Activated naive CD8-positive, alpha-beta T cell treated with anti-CD3 and anti-CD28 coated beads, Interleukin-2, amount 10 ng/mL, durations not matched to agents 7 days and 5 days (primary cell): ENCODE measurements at regions of chr6 and their contacts with region 1.

Region 1: DNA sequence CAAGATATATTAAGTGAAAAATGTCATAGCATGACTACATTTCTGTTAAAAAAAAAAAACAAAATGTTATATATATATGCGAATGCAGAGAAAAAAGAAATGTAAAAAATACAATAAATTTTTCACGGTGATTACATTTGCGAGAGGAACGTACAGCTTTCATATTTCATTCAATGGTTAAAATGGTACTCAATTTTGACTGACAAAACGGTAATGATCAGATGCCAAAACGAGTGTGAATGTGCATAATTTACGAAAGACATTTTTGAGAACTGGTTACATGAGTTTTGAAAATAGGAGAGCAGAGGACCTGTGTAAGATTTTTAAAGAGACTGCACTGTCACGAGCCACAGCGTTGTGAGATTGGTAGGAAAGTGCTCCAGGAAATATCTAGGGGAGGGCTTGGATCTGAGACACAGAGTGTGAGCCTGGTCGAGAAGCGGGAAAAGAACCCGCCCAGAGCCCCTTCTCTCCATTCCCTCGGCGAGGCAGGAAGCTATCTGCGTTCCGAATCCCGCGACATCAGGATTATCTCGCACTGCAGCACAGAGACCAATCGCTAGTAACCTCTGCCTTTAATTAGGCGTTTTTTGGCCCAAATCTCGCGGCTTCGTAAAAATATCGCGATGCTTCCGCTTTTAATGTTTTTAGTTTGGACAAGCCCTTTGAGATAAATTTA is 28.5 kb downstream of the TRIM27 start:
- DNase-seq: peak; percentile 80
- ATAC-seq: peak; percentile 78
- H3K4me3 Mint-ChIP-seq: peak overlapping the region; percentile 94
- H3K27ac Mint-ChIP-seq: peak overlapping the region; percentile 97
- H3K4me1 Mint-ChIP-seq: peaks cover 19% of the 10 kb centered on the region
- H3K27me3 Mint-ChIP-seq: no peaks in the 10 kb centered on the region

Region 2: GRCh38 chr6:28838634-28839442 is 56.4 kb before region 1 on chr6:
- POLR2A ChIA-PET with region 1: interaction called, 16 read pairs
- DNase-seq: peak; percentile 85
- ATAC-seq: peak; percentile 80
- H3K4me3 Mint-ChIP-seq: peak overlapping the region; percentile 93
- H3K27ac Mint-ChIP-seq: peak overlapping the region; percentile 86
- H3K4me1 Mint-ChIP-seq: peaks cover 23% of the 10 kb centered on the region
- H3K27me3 Mint-ChIP-seq: peaks cover 42% of the 10 kb centered on the region

Region 3: GRCh38 chr6:28863604-28864320 is 31.5 kb before region 1 on chr6:
- POLR2A ChIA-PET with region 1: interaction called, 28 read pairs
- DNase-seq: peak; percentile 77
- ATAC-seq: peak; percentile 34
- H3K4me3 Mint-ChIP-seq: peak overlapping the region; percentile 92
- H3K27ac Mint-ChIP-seq: peak overlapping the region; percentile 88
- H3K4me1 Mint-ChIP-seq: peaks cover 39% of the 10 kb centered on the region
- H3K27me3 Mint-ChIP-seq: peaks cover 3% of the 10 kb centered on the region

Region 4: DNA sequence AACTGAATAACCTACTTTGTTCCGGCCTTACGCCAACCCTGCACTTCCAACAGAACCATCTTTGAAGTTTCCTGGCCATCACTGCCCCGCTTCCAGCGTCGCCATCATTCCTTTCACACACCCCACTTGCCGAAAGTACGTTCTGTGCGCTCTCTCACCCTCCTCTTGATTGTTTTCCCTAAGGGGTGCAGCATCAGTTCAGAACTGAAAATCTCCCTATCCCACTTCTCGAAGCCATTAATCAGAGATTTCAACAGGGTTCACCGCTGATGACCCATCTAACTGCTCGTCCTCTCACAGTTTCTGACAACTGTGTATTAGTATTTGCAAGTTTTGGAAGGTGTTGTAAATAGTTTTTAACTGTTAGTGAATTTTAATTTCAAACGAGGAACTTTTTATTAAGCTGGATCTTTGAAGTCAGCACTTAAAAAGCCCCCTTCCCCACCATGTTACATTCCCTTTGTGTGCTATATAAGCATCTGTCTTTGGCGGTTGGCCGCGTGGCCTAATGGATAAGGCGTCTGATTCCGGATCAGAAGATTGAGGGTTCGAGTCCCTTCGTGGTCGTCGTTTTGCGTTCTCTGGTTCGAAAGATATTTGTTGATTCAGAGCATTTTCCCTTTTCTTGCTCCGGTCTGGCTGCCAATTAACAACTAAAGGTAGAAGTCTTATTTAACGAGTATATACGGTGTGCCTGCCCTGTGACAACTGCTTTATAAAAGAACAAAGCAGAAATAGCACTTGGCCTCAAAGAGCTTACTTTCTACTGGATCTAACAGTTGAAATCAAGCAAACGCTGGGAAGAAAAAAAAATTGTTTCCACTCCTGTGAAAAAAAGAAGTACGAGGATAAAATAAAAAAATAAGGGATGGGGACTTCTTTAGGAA is 14.1 kb before region 1 on chr6:
- POLR2A ChIA-PET with region 1: interaction called, 119 read pairs
- DNase-seq: peak; percentile 64
- ATAC-seq: no peak
- H3K4me3 Mint-ChIP-seq: peak overlapping the region; percentile 84
- H3K27ac Mint-ChIP-seq: peak overlapping the region; percentile 81
- H3K4me1 Mint-ChIP-seq: peaks cover 29% of the 10 kb centered on the region
- H3K27me3 Mint-ChIP-seq: peaks cover 20% of the 10 kb centered on the region

Region 5: DNA sequence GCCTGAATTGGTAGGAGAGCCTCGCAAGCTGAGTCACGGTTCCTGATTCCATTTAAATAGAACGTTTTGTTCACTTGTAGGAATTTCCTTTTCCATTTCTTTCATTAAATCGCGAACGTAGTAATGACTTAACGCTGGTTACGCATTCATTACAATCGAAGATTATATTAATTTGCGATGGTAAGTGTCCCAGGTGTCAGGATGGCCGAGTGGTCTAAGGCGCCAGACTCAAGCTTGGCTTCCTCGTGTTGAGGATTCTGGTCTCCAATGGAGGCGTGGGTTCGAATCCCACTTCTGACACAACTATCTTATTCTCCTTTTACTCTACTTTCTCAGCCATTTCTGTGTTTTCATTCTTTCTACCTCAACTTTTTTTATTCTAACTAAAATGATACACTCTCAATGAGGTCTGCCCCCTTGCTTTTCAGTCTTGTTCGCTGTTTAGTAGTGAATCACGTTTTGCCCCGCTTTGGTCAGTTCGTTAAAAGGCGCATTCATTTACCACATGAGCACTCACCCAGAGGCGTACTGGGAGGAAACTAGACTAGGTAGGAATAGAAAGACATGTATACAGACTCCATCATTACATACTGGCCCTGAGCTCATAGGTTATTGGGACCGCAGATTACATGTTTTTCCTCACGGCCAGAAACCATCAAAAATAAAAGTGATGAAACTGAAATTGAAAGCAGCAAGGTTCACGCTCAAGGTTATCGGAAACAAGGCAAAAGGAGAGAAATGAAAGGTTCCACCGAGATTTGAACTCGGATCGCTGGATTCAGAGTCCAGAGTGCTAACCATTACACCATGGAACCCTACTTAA is 45.8 kb after region 1 on chr6:
- POLR2A ChIA-PET with region 1: interaction called, 14 read pairs
- DNase-seq: peak; percentile 60
- ATAC-seq: peak; percentile 66
- H3K4me3 Mint-ChIP-seq: peak overlapping the region; percentile 86
- H3K27ac Mint-ChIP-seq: peak overlapping the region; percentile 95
- H3K4me1 Mint-ChIP-seq: peaks cover 36% of the 10 kb centered on the region
- H3K27me3 Mint-ChIP-seq: peaks cover 4% of the 10 kb centered on the region

Region 6: DNA sequence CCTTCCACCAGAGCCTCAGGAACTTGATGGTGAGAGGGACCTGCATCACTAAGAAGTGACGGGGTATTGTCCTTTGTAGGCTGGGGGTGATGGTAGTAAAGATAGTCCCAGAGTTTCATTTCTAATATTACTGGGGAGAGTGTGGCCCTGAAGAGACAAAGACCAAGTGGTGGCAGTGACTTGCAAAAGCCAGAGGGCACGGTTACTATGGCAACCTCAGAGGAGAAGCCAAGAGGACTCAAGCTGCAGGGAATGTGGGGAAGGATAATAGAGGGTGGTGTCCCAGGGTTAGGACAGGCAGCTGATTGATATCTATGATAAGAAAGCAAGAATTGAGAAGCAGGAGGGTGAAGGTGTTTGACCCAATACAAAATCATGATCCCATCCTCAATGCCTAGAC is 974.8 kb after region 1 on chr6:
- POLR2A ChIA-PET with region 1: no interaction called
- DNase-seq: no peak
- ATAC-seq: no peak
- H3K4me3 Mint-ChIP-seq: no peak overlapping the region
- H3K27ac Mint-ChIP-seq: no peak overlapping the region
- H3K4me1 Mint-ChIP-seq: peaks cover 1% of the 10 kb centered on the region
- H3K27me3 Mint-ChIP-seq: peaks cover 24% of the 10 kb centered on the region